ENCODE measurements at regions of chr2 and their contacts with region 1.

Region 1: GRCh38 chr2:74147727-74148456 is at the start of gene BOLA3:
- DNase-seq: peak; percentile 91
- H3K4me3 ChIP-seq: peak within 1 kb of the TSS; percentile 74
- H3K27ac ChIP-seq: peak within 1 kb of the TSS; percentile 47
- H3K4me1 ChIP-seq: peaks cover 24% of the 10 kb centered on the region
- CTCF ChIP-seq: peak; percentile 83
- total RNA-seq, gene BOLA3: 33.6 and 45.8 TPM in 2 replicates

Region 2: GRCh38 chr2:73907840-73908452 is 239.9 kb before region 1 on chr2:
- CTCF ChIA-PET with region 1: interaction called, 5 read pairs
- POLR2A ChIA-PET with region 1: no interaction called
- intact Hi-C with region 1: loop called (anchors 5 kb)
- DNase-seq: peak; percentile 67
- H3K4me3 ChIP-seq: no peak overlapping the region
- H3K27ac ChIP-seq: no peak overlapping the region
- H3K4me1 ChIP-seq: no peaks in the 10 kb centered on the region
- CTCF ChIP-seq: peak; percentile 78

Region 3: DNA sequence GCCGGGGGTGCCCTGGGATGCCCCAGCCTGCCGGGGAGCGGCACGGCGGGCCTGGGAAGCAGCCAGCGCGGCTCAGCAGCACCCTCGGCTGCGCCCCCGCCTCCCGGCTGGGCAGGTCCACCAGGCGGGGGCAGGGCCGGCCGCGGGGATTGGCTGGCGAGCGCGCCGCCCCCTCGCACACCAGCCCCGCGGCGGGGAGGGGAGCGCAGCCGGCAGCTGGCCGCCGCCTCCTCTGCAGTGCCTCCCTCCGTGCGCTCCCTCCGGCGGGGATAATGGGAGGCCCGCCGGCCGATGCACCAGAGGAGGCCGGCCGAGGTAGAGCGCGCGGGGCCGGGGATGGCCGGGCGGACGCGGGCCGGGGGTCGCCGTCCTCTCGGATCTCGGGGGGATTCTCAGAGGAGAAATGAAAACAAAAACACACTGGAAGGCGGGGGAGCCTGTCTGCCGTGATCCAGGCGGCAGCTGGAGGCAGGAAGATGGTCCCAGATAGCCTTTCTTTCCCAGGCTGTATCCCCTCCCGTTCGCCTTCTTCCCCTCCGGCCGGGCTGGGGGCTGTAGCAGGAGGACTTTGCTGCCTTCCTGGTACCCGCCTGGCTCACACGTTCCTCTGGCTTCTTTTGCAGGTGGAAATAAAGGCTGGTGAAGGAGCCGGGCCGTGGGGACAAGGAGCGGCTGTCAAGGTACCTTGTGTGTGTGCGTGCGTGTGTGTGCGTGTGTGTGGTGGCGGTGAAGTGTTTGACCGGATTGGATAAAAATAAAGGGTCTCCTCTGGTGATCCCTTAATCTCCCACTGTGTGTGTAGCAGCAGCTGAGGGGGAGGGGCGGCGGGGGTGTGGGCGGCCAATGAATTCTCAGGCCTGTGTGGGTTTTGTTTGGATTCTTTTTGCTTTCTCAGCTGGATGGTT is 145.2 kb before region 1 on chr2:
- CTCF ChIA-PET with region 1: no interaction called
- POLR2A ChIA-PET with region 1: no interaction called
- intact Hi-C with region 1: loop called (anchors 5 kb)
- DNase-seq: peak; percentile 76
- H3K4me3 ChIP-seq: peak overlapping the region; percentile 52
- H3K27ac ChIP-seq: no peak overlapping the region
- H3K4me1 ChIP-seq: peaks cover 19% of the 10 kb centered on the region
- CTCF ChIP-seq: 0 out of 2 replicates have a peak, but pooled peaks have one; percentile 14

Region 4: DNA sequence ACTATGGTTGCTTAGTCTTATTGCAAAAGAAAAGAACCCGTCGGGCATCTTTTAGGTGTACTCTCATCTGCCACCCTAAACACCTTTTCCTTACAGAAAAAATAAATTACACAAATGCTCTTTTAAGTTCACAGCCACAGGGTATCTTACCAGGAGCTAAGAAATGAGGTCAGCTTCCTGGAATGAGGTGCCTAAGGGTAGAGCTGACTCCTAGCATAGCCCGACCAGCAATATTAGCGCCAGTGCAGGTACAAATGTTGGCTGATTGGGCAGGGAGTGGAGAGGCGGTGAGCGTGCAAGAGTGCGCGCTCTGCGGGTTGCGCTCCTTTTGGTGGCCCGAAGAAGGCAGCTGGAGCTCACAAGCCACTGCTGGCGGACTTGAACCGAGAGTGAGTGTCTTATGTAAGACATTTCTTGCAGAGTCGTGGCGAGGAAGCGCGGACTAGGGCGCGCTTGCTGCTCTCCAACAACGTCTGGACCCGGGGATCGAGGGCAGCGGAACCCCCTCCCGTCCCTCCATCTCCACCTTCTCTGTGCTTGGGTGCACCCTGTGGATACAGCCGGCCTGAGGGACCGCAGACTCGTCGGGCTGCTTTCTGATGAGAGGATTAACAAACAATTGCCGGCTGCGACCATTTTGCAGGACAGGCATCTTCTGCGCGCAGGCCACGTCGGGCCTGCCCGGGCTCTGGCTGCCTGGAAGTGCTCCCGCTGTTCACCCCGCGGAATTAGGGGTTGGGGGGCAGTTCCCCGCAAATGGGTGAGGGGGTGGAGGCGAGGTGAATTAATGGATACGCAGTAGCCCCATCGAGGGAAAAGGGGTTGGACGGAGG is 17.5 kb before region 1 on chr2:
- CTCF ChIA-PET with region 1: no interaction called
- POLR2A ChIA-PET with region 1: no interaction called
- intact Hi-C with region 1: no loop called
- DNase-seq: no peak
- H3K4me3 ChIP-seq: no peak overlapping the region
- H3K27ac ChIP-seq: no peak overlapping the region
- H3K4me1 ChIP-seq: no peaks in the 10 kb centered on the region
- CTCF ChIP-seq: no peak

Region 5: DNA sequence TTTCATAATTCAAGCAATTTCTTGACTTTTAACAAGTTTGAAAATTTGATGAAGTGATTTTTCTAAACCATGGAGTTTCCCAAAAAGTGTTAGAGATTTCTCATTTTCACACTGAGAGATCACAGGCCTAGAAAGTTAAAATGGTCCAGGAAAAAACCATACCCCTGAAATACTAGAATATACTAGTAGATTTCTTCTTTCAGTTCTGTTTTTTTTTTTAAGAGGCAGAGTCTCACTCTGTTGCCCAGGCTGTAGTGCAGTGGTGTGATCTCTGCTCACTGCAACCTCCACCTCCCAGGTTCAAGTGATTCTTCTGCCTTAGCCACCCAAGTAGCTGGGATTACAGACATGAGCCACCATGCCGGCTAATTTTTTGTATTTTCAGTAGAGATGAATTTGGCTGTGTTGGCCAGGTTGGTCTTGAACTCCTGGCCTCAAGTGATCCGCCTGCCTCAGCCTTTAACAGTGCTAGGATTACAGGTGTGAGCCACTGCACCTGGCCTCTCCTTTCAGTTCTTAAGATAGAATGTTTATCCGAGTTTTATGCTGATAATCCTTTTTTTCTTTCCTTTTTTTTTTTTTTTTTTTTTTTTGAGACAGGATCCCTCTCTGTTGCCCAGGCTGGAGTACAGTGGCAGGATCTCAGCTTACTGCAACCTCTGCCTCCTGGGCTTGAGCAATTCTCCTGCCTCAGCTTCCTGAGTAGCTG is 65.0 kb after region 1 on chr2:
- CTCF ChIA-PET with region 1: no interaction called
- POLR2A ChIA-PET with region 1: interaction called, 3 read pairs
- intact Hi-C with region 1: loop called (anchors 5 kb)
- DNase-seq: no peak
- H3K4me3 ChIP-seq: no peak overlapping the region
- H3K27ac ChIP-seq: no peak overlapping the region
- H3K4me1 ChIP-seq: no peaks in the 10 kb centered on the region
- CTCF ChIP-seq: no peak

Region 6: GRCh38 chr2:74391580-74392448 is 243.9 kb after region 1 on chr2:
- CTCF ChIA-PET with region 1: no interaction called
- POLR2A ChIA-PET with region 1: no interaction called
- intact Hi-C with region 1: loop called (anchors 5 kb)
- DNase-seq: peak; percentile 95
- H3K4me3 ChIP-seq: peak overlapping the region; percentile 89
- H3K27ac ChIP-seq: peak overlapping the region; percentile 46
- H3K4me1 ChIP-seq: peaks cover 8% of the 10 kb centered on the region
- CTCF ChIP-seq: peak; percentile 97